ENCODE measurements at regions of chr4 and their contacts with region 1.

Region 1: GRCh38 chr4:54971474-54971950 is 153.9 kb downstream of the KDR start:
- DNase-seq: no peak
- H3K4me3 ChIP-seq: no peak overlapping the region
- H3K27ac ChIP-seq: no peak overlapping the region
- H3K4me1 ChIP-seq: no peaks in the 10 kb centered on the region
- H3K27me3 ChIP-seq: no peaks in the 10 kb centered on the region
- CTCF ChIP-seq: peak; percentile 36 to 49 (median 39)
- EP300 ChIP-seq: no peak
- POLR2A ChIP-seq: no peak

Region 2: GRCh38 chr4:54333657-54334056 is 637.9 kb before region 1 on chr4:
- in situ Hi-C with region 1: loop called in 1 of 4 experiments (anchors 25 kb)
- intact Hi-C with region 1: no loop called
- DNase-seq: no peak
- H3K4me3 ChIP-seq: no peak overlapping the region
- H3K27ac ChIP-seq: no peak overlapping the region
- H3K4me1 ChIP-seq: no peaks in the 10 kb centered on the region
- H3K27me3 ChIP-seq: no peaks in the 10 kb centered on the region
- CTCF ChIP-seq: no peak
- EP300 ChIP-seq: no peak
- POLR2A ChIP-seq: no peak

Region 3: DNA sequence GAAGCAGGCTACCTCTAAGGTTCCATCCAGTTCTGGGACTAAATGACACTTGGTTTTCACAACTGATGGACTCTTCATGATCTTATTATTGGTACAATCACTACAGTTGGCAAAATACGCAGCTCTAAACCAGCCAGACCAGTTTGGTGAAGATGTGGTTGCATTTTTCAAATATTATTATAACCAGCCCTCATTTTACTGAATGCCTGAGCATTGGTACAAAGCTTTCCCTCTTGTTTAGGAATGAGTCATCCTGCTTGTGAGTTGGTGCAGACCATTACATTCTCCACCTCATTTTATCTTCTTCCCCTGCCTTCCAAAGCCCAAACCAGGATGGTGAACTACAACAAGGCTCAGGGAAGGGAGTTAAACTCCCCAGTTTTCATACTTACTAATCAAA is 69.2 kb before region 1 on chr4:
- in situ Hi-C with region 1: no loop called
- intact Hi-C with region 1: no loop called
- DNase-seq: no peak
- H3K4me3 ChIP-seq: no peak overlapping the region
- H3K27ac ChIP-seq: no peak overlapping the region
- H3K4me1 ChIP-seq: no peaks in the 10 kb centered on the region
- H3K27me3 ChIP-seq: no peaks in the 10 kb centered on the region
- CTCF ChIP-seq: no peak
- EP300 ChIP-seq: no peak
- POLR2A ChIP-seq: no peak

Region 4: GRCh38 chr4:55312489-55313101 is 341.1 kb after region 1 on chr4:
- in situ Hi-C with region 1: loop called in 1 of 4 experiments (anchors 25 kb)
- intact Hi-C with region 1: no loop called
- DNase-seq: peak; percentile 33
- H3K4me3 ChIP-seq: no peak overlapping the region
- H3K27ac ChIP-seq: no peak overlapping the region
- H3K4me1 ChIP-seq: no peaks in the 10 kb centered on the region
- H3K27me3 ChIP-seq: no peaks in the 10 kb centered on the region
- CTCF ChIP-seq: peak; percentile 51 to 61 (median 53)
- EP300 ChIP-seq: no peak
- POLR2A ChIP-seq: no peak

Measured in transverse colon (tissue), 4 donors.